ENCODE measurements at regions of chr6 and their contacts with region 1.

Region 1: GRCh38 chr6:16332175-16332542 is 93.8 kb downstream of the GMPR start:
- H3K4me3 ChIP-seq: no peak overlapping the region
- H3K27ac ChIP-seq: no peak overlapping the region
- H3K4me1 ChIP-seq: no peaks in the 10 kb centered on the region
- CTCF ChIP-seq: peak; percentile 76

Region 2: DNA sequence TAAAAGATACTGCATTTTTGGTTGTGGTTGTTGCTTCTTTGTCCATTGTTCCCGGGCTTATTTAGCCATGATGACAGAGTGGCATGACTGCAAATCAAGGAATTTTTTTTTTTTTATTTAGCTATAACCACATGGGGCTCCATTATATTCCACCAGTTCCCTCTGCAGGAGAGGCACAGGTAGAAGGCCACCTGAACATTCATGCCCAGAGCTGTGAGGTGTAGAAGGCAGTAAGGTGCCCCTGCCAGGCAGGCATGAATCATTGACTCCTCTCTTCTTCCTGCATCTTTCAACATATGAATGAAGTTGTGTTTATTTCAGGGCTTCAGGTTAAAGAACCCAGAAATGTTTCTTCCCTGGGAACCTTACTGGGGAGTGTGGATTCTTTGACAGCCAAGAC is 295.4 kb before region 1 on chr6:
- CTCF ChIA-PET with region 1: no interaction called
- POLR2A ChIA-PET with region 1: no interaction called
- H3K4me3 ChIP-seq: no peak overlapping the region
- H3K27ac ChIP-seq: no peak overlapping the region
- H3K4me1 ChIP-seq: no peaks in the 10 kb centered on the region
- CTCF ChIP-seq: no peak

Region 3: GRCh38 chr6:16286148-16286522 is 46.0 kb before region 1 on chr6:
- CTCF ChIA-PET with region 1: interaction called, 16 read pairs
- POLR2A ChIA-PET with region 1: no interaction called
- H3K4me3 ChIP-seq: no peak overlapping the region
- H3K27ac ChIP-seq: no peak overlapping the region
- H3K4me1 ChIP-seq: no peaks in the 10 kb centered on the region
- CTCF ChIP-seq: 0 out of 2 replicates have a peak, but pooled peaks have one; percentile 49

Region 4: GRCh38 chr6:16409531-16410441 is 77.6 kb after region 1 on chr6:
- CTCF ChIA-PET with region 1: interaction called, 10 read pairs
- POLR2A ChIA-PET with region 1: no interaction called
- H3K4me3 ChIP-seq: no peak overlapping the region
- H3K27ac ChIP-seq: no peak overlapping the region
- H3K4me1 ChIP-seq: no peaks in the 10 kb centered on the region
- CTCF ChIP-seq: no peak; the same call in 1 of the 2 replicates

Region 5: GRCh38 chr6:16770701-16771569 is 438.8 kb after region 1 on chr6:
- CTCF ChIA-PET with region 1: interaction called, 17 read pairs
- POLR2A ChIA-PET with region 1: no interaction called
- H3K4me3 ChIP-seq: no peak overlapping the region
- H3K27ac ChIP-seq: peak overlapping the region; percentile 12; the same call in 1 of the 2 replicates
- H3K4me1 ChIP-seq: peaks cover 46% of the 10 kb centered on the region
- CTCF ChIP-seq: peak; percentile 72

Region 6: GRCh38 chr6:16999491-17000436 is 667.6 kb after region 1 on chr6:
- CTCF ChIA-PET with region 1: interaction called, 10 read pairs
- POLR2A ChIA-PET with region 1: no interaction called
- H3K4me3 ChIP-seq: no peak overlapping the region
- H3K27ac ChIP-seq: no peak overlapping the region
- H3K4me1 ChIP-seq: 0 out of 2 replicates have a peak, but pooled peaks cover 3% of the 10 kb centered on the region
- CTCF ChIP-seq: no peak